AG04449 (cell line): ENCODE measurements at regions of chr1 and their contacts with region 1.

Region 1: GRCh38 chr1:112809253-112809684 is 94.1 kb upstream of the PPM1J start:
- DNase-seq: no peak
- H3K4me3 ChIP-seq: no peak overlapping the region
- CTCF ChIP-seq: peak; percentile 97

Region 2: GRCh38 chr1:112794654-112795239 is 14.5 kb before region 1 on chr1:
- CTCF ChIA-PET with region 1: interaction called, 25 read pairs
- POLR2A ChIA-PET with region 1: no interaction called
- DNase-seq: no peak
- H3K4me3 ChIP-seq: no peak overlapping the region
- CTCF ChIP-seq: no peak

Region 3: DNA sequence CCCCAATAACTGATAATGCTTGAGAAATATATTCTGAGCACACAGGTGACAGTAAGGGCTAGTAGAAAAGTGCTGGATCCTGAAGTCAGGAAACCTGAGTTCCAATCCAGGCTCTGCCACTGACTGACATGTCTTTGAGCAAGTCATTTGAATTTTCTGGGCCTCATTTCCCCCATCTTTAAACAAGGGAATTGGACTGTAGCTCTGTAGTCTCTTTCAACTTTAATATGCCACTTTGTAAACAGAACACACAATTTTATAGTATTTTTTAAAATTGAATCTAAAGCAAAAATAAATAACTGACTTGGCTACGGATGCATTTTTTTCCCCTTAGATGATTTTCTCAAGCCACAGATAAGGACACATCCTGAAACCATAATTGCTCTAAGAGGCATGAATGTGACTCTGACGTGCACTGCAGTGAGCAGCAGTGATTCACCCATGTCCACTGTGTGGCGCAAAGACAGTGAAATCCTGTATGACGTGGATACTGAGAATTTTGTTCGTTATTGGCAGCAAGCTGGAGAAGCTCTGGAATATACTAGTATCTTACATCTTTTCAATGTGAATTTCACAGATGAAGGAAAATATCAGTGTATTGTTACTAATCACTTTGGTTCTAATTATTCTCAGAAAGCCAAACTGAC is 300.8 kb after region 1 on chr1:
- CTCF ChIA-PET with region 1: no interaction called
- POLR2A ChIA-PET with region 1: no interaction called
- DNase-seq: peak; percentile 91
- H3K4me3 ChIP-seq: no peak overlapping the region
- CTCF ChIP-seq: peak; percentile 43

Region 4: GRCh38 chr1:113140588-113141446 is 331.5 kb after region 1 on chr1:
- CTCF ChIA-PET with region 1: no interaction called
- POLR2A ChIA-PET with region 1: no interaction called
- DNase-seq: no peak
- H3K4me3 ChIP-seq: no peak overlapping the region
- CTCF ChIP-seq: peak; percentile 70